ENCODE measurements at regions of chr1 and their contacts with region 1.

Region 1: GRCh38 chr1:19191781-19192180 is 18.3 kb downstream of the UBR4 start:
- DNase-seq: no peak
- H3K4me3 ChIP-seq: no peak overlapping the region
- H3K27ac ChIP-seq: no peak overlapping the region
- H3K4me1 ChIP-seq: no peaks in the 10 kb centered on the region
- H3K27me3 ChIP-seq: no peaks in the 10 kb centered on the region
- CTCF ChIP-seq: no peak

Region 2: GRCh38 chr1:19156676-19157075 is 35.1 kb before region 1 on chr1:
- CTCF ChIA-PET with region 1: no interaction called
- POLR2A ChIA-PET with region 1: no interaction called
- intact Hi-C with region 1: loop called (anchors 5 kb)
- DNase-seq: peak; percentile 33 to 82
- H3K4me3 ChIP-seq: no peak overlapping the region
- H3K27ac ChIP-seq: peak overlapping the region; percentile 50
- H3K4me1 ChIP-seq: peaks cover 21% of the 10 kb centered on the region
- H3K27me3 ChIP-seq: no peaks in the 10 kb centered on the region
- CTCF ChIP-seq: no peak

Measured in PC-9 (cell line).